ENCODE measurements at regions of chr18 and their contacts with region 1.

Region 1: DNA sequence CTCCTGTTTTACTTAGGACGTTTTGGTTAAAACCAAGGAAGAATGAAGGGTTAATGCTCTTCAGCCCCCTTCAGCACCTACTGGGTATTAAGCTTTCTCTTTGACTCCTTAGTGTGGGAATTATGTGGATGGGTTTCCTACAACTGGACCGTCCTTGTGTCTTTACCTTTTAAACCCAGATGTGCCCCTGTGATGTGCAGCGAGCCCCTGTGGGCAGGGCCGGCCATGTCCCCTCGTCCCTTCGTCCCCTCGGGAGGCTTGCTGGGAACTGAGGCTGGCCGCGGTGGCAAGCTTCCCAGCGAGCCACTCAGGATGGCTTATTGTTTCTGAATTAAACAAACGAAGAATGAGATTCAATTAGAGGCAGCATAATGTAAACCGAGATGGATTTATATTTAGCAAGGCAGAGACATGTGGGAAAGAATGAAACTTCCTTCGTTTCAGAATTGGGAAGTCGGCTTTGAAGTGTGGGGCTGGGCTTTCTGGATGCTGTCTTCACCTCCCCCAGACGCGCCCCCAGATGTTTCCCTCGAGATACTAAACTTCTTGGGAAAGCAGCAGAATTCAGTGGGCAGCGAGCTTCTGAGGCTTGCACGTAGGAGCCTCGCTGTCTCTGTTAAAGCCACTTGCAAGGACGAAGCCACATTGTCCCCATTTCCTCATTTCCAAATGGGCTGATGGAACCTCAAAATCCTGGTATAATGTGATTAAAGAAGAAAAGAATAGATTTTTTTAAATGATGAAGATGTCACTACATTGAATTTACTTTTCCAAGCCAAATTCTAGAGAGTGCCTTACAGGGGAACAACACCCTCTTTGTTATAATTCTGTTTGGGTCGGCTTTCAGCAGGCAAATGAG is 146.0 kb downstream of the VAPA start:
- DNase-seq: no peak

Region 2: DNA sequence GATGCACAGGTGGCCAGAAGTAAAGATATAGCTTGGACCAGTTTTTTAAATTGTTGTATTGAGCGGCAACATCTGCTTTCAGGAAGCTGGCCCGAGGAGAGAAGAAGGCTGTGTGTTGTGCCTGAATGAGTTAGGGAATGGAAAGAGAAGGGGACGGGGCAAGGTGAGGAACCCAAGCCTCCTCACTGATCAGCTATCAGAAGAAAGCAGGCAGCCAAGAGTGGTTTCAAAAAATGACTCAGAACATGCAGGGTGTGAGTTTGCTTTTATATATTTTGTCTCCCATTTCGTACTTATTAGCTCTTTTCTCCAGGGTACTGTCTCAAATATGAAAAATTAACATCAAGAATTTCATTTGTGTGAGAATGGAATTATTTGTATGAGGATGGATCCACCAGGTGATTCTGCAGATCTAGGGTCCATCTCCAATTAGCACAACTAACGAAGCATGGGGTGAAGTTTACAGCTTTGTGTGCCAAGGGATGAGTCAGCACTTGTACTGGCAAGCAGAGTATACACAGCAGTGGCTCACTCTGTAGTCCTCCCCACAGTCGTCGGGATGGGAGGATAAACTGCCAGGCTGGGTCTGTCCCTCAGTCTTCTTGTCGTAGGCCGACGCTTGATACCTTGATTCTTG is 913.8 kb after region 1 on chr18:
- intact Hi-C with region 1: no loop called
- DNase-seq: no peak

Region 3: GRCh38 chr18:10995550-10995949 is 935.7 kb after region 1 on chr18:
- intact Hi-C with region 1: loop called in 1 of 2 experiments (anchors 5 kb)
- DNase-seq: no peak

Measured in posterior vena cava (tissue), 2 donors.